Thyroid gland (tissue), 4 donors: ENCODE measurements at regions of chr7 and their contacts with region 1.

Region 1: DNA sequence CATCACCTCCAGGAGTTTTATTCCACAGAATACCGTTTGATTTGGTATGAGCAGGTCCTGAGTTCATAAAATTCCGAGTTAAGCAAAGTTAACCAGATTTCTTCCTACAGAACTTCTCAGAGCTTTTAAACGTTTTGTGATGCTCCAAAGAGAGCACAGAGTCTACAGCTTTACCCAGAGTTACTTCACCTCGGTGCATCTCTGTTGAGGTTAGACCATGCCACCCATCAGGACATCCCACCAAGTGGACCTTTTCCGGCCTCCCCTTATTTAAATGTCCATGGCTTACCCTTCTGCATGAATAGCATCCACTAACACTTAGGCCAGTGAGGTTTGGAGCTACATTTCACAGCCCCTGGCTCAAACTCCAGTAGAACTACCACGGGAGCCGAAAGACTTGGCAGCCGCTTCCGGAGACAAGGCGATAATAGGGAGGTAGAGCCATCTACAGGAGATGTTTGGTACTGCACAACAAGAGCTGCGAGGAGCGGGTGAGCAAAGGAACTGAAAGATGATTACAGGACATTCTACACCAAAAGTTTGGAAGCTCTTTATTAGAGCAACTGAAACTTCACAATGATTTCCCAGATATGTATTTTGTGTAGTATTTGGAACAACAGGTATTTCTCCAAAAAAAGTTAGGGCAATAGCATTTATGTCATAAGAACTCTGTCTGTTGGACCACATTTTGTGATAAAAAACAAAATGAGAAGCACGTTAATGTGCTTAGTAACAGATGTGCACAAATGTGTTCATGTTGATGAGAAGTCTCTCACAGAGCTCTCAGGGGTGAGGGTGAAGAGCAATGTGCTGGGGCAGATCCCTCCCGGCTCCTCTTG is 174.7 kb downstream of the HERPUD2 start:
- DNase-seq: peak; percentile 70 to 75
- H3K4me3 ChIP-seq: no peak overlapping the region
- H3K27ac ChIP-seq: no peak overlapping the region
- H3K4me1 ChIP-seq: no peaks in the 10 kb centered on the region
- H3K27me3 ChIP-seq: no peaks in the 10 kb centered on the region
- CTCF ChIP-seq: peak; percentile 60 to 90 (median 78)
- POLR2A ChIP-seq: no peak

Region 2: GRCh38 chr7:35185907-35186731 is 334.1 kb before region 1 on chr7:
- intact Hi-C with region 1: loop called (anchors 10 kb)
- DNase-seq: peak; percentile 22 to 23
- H3K4me3 ChIP-seq: peak overlapping the region; percentile 3 to 25 (median 17)
- H3K27ac ChIP-seq: no peak overlapping the region
- H3K4me1 ChIP-seq: peaks cover 0 to 12% of the 10 kb centered on the region in 2 donors
- H3K27me3 ChIP-seq: no peaks in the 10 kb centered on the region
- CTCF ChIP-seq: no peak
- POLR2A ChIP-seq: no peak

Region 3: GRCh38 chr7:35894721-35895120 is 374.5 kb after region 1 on chr7:
- intact Hi-C with region 1: no loop called
- DNase-seq: no peak
- H3K4me3 ChIP-seq: no peak overlapping the region
- H3K27ac ChIP-seq: no peak overlapping the region
- H3K4me1 ChIP-seq: no peaks in the 10 kb centered on the region
- H3K27me3 ChIP-seq: no peaks in the 10 kb centered on the region
- CTCF ChIP-seq: no peak
- POLR2A ChIP-seq: no peak

Region 4: GRCh38 chr7:36057323-36057722 is 537.1 kb after region 1 on chr7:
- intact Hi-C with region 1: no loop called
- DNase-seq: no peak
- H3K4me3 ChIP-seq: no peak overlapping the region
- H3K27ac ChIP-seq: no peak overlapping the region
- H3K4me1 ChIP-seq: no peaks in the 10 kb centered on the region
- H3K27me3 ChIP-seq: no peaks in the 10 kb centered on the region
- CTCF ChIP-seq: no peak
- POLR2A ChIP-seq: no peak